Endothelial cell of umbilical vein (primary cell): ENCODE measurements at regions of chr5 and their contacts with region 1.

Region 1: GRCh38 chr5:170070556-170071412 is 34.9 kb upstream of the FOXI1 start:
- DNase-seq: peak; percentile 56
- H3K4me3 ChIP-seq: no peak overlapping the region
- H3K27ac ChIP-seq: no peak overlapping the region
- H3K4me1 ChIP-seq: peaks cover 11% of the 10 kb centered on the region
- H3K27me3 ChIP-seq: no peaks in the 10 kb centered on the region
- CTCF ChIP-seq: peak; percentile 62 to 91
- POLR2A ChIP-seq: no peak

Region 2: GRCh38 chr5:169701910-169702451 is 368.8 kb before region 1 on chr5:
- CTCF ChIA-PET with region 1: interaction called, 80 read pairs
- POLR2A ChIA-PET with region 1: no interaction called
- dilution Hi-C with region 1: no loop called
- intact Hi-C with region 1: loop called (anchors 1 kb)
- DNase-seq: peak; percentile 45
- H3K4me3 ChIP-seq: no peak overlapping the region
- H3K27ac ChIP-seq: no peak overlapping the region
- H3K4me1 ChIP-seq: peaks cover 28% of the 10 kb centered on the region
- H3K27me3 ChIP-seq: no peaks in the 10 kb centered on the region
- CTCF ChIP-seq: peak; percentile 25 to 42
- POLR2A ChIP-seq: no peak

Region 3: GRCh38 chr5:169850409-169850808 is 220.4 kb before region 1 on chr5:
- CTCF ChIA-PET with region 1: interaction called, 6 read pairs
- POLR2A ChIA-PET with region 1: no interaction called
- dilution Hi-C with region 1: no loop called
- intact Hi-C with region 1: loop called (anchors 1 kb)
- DNase-seq: no peak
- H3K4me3 ChIP-seq: no peak overlapping the region
- H3K27ac ChIP-seq: no peak overlapping the region
- H3K4me1 ChIP-seq: no peaks in the 10 kb centered on the region
- H3K27me3 ChIP-seq: no peaks in the 10 kb centered on the region
- CTCF ChIP-seq: peak; percentile 9 to 13
- POLR2A ChIP-seq: no peak

Region 4: GRCh38 chr5:169917500-169917899 is 153.3 kb before region 1 on chr5:
- CTCF ChIA-PET with region 1: no interaction called
- POLR2A ChIA-PET with region 1: no interaction called
- dilution Hi-C with region 1: no loop called
- intact Hi-C with region 1: no loop called
- DNase-seq: no peak
- H3K4me3 ChIP-seq: no peak overlapping the region
- H3K27ac ChIP-seq: no peak overlapping the region
- H3K4me1 ChIP-seq: peaks cover 6% of the 10 kb centered on the region
- H3K27me3 ChIP-seq: no peaks in the 10 kb centered on the region
- CTCF ChIP-seq: no peak
- POLR2A ChIP-seq: no peak

Region 5: GRCh38 chr5:170017772-170018171 is 53.0 kb before region 1 on chr5:
- CTCF ChIA-PET with region 1: interaction called, 11 read pairs
- POLR2A ChIA-PET with region 1: no interaction called
- dilution Hi-C with region 1: no loop called
- intact Hi-C with region 1: no loop called
- DNase-seq: no peak
- H3K4me3 ChIP-seq: no peak overlapping the region
- H3K27ac ChIP-seq: no peak overlapping the region
- H3K4me1 ChIP-seq: no peaks in the 10 kb centered on the region
- H3K27me3 ChIP-seq: peaks cover 15 to 19% of the 10 kb centered on the region in 2 experiments
- CTCF ChIP-seq: no peak
- POLR2A ChIP-seq: no peak

Region 6: DNA sequence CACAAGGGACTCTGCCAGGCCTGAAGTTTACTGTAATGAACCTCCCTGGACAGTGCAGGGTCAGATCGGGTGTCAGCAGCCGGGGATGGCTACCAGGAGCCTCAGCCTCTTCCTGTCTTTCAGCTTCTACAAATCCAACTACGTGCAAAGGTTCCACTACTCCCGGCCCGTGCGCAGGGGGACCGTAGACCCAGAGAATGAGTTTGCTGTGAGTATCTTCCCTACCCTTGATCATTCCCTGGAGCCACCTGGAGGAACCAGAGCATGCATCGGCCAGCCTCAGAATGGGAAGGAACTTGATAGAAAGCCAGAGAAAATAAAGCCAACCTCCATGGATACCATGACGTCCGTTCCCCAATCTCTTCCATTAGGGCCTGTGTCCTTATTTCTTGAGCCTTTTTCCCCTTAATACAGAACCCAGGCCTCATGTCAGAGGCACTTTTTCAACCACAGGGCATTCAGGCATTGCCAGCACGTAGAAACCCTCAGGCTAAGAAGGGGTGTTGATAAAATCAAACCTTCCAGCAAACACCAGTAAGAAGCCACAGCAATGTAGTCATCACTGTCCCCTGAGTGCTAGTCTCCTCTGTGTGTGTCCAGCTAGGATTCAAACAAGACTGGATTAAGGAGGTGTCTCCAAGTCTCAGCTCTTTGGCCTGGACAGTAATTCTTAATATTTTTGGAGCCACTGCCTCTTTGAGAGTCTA is 14.1 kb before region 1 on chr5:
- CTCF ChIA-PET with region 1: interaction called, 84 read pairs
- POLR2A ChIA-PET with region 1: no interaction called
- dilution Hi-C with region 1: no loop called
- intact Hi-C with region 1: no loop called
- DNase-seq: peak; percentile 5
- H3K4me3 ChIP-seq: no peak overlapping the region
- H3K27ac ChIP-seq: no peak overlapping the region
- H3K4me1 ChIP-seq: peaks cover 14% of the 10 kb centered on the region
- H3K27me3 ChIP-seq: no peaks in the 10 kb centered on the region
- CTCF ChIP-seq: no peak
- POLR2A ChIP-seq: no peak

Region 7: GRCh38 chr5:170115925-170116324 is 45.1 kb after region 1 on chr5:
- CTCF ChIA-PET with region 1: no interaction called
- POLR2A ChIA-PET with region 1: no interaction called
- dilution Hi-C with region 1: no loop called
- intact Hi-C with region 1: no loop called
- DNase-seq: no peak
- H3K4me3 ChIP-seq: no peak overlapping the region
- H3K27ac ChIP-seq: no peak overlapping the region
- H3K4me1 ChIP-seq: peaks cover under 1% of the 10 kb centered on the region
- H3K27me3 ChIP-seq: no peaks in the 10 kb centered on the region
- CTCF ChIP-seq: no peak
- POLR2A ChIP-seq: no peak

Region 8: GRCh38 chr5:170183816-170184687 is 113.3 kb after region 1 on chr5:
- CTCF ChIA-PET with region 1: interaction called, 13 read pairs
- POLR2A ChIA-PET with region 1: no interaction called
- dilution Hi-C with region 1: loop called (anchors 25 kb)
- intact Hi-C with region 1: no loop called
- DNase-seq: peak; percentile 65
- H3K4me3 ChIP-seq: no peak overlapping the region
- H3K27ac ChIP-seq: no peak overlapping the region
- H3K4me1 ChIP-seq: no peaks in the 10 kb centered on the region
- H3K27me3 ChIP-seq: no peaks in the 10 kb centered on the region
- CTCF ChIP-seq: peak; percentile 84 to 94
- POLR2A ChIP-seq: no peak

Region 9: DNA sequence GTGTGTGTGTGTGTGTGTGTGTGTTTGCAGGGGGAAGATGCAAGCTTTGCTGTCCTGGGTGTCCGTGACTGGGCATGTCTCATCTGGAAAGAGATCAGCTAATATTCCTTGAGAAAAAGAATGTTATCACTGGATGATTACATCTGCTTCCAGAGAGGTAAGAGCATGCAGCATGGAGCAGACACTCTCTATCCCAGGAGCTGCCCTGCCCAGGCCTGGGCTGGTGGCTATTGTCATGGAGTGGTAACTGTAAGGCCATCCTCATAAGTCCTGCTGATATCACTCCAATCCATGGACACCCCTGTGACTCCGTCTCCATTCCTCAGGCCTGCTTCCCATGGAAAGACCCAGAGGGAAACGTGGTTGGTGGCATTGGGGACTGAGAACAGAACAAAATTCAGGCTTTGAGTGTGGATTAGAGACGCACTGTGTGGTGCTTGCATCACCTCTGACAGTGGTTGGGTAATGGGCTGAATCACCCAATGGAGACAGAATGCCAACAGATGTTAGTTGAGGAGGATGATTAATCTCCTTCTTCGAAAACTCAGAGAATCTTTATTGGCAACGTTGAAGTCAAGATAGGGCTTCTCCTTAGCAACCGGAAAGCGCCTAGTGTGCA is 381.1 kb after region 1 on chr5:
- CTCF ChIA-PET with region 1: no interaction called
- POLR2A ChIA-PET with region 1: no interaction called
- dilution Hi-C with region 1: no loop called
- intact Hi-C with region 1: no loop called
- DNase-seq: no peak
- H3K4me3 ChIP-seq: no peak overlapping the region
- H3K27ac ChIP-seq: no peak overlapping the region
- H3K4me1 ChIP-seq: no peaks in the 10 kb centered on the region
- H3K27me3 ChIP-seq: peaks cover 4 to 17% of the 10 kb centered on the region in 2 experiments
- CTCF ChIP-seq: no peak
- POLR2A ChIP-seq: no peak